Right ventricle myocardium inferior (tissue), 1 donor: ENCODE measurements at regions of chr3 and their contacts with region 1.

Region 1: DNA sequence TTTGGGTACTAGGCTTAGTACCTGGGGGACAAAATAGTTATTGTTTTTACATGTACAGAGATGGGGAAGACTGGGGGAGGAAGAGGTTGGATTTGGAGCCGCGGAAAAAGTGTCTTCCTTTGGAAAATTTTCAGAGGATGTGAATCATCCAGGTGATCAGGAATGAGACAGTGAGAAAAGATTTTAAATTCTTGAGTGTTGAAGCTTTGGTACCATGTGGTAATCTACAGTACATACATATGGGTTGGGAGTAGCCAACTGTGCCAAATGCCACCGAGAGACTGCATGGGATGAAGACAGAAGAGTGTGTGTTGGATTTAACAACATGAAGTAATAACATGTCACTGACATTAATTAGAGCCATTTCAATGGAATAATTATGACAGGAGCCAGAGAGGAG is 1238.2 kb downstream of the ROBO1 start:
- DNase-seq: no peak
- ATAC-seq: no peak

Region 2: DNA sequence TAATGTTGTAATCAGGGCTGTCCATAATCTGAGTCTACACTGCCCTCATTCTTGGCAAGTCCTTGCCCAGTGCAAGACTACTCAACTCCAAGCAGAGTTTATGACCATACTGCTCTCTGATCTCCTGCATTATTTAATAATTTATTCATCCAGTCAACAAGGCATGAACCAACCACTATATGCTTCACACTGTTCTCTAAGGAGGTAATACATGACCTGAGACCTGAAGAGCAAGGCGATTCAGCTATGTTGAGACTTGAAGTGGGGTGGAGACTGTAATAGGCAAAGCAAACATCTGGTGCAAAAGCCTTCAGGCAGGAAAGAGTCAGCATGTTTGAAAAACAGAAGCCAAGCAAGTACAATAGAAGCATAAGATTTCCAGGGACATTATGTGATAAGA is 126.9 kb before region 1 on chr3:
- intact Hi-C with region 1: loop called (anchors 10 kb)
- DNase-seq: no peak
- ATAC-seq: no peak